ENCODE measurements at regions of chr12 and their contacts with region 1.

Region 1: DNA sequence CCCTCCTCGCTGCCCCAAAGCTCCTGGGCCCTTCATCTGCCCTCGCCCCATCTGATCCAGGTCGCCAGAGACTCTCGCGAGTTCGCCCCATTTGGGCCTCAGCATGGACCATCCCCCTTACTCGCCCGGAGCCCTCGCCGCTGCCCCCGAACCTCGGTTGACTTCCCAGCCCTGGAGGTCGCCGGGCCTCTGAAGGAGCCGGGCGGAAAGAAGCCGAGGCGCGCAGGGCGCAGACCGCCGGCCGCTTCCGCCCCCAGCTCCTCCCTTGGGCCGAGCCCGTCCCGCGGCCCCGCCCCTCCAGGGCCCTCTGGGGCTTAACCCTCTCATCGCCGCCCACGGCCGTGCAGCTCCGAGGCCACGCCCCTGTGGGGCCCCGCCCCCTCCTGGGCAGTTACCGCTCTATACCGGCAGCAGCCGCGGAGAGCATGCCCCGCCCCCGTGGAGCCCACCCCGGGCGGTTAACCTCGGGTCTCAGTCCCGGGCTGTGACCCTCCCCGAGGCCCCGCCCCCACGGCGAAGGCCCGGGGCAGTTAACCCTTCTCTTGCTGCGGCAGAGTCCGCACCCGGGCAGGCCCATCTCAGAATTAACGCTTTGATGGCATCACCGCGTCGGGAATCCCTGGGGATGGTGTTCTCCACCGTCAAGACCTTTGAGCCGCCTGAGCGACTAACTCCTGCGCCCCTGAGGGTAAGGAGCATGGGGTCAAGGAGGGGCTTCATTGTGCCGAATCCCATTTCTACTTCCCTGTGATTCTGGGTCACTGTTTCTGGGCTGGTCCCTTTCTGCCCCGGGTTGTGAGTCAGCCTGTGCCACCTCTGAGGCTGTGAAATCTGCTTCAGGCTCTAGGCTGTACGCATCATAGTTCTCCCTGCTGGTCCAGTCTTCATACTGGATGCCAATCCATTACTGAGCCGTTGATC is at the start of gene SPSB2:
- DNase-seq: peak; percentile 86 to 98 (median 94)
- H3K4me3 ChIP-seq: peak within 1 kb of the TSS; percentile 55 to 100 (median 88)
- H3K27ac ChIP-seq: peak within 1 kb of the TSS; percentile 25 to 99 (median 85)
- H3K27me3 ChIP-seq: no peaks in the 10 kb centered on the region
- CTCF ChIP-seq: peak in 33 of 56 donors; percentile 5 to 54 (median 32)
- total RNA-seq, gene SPSB2: 1.8 to 12.4 (median 5.6) TPM

Region 2: DNA sequence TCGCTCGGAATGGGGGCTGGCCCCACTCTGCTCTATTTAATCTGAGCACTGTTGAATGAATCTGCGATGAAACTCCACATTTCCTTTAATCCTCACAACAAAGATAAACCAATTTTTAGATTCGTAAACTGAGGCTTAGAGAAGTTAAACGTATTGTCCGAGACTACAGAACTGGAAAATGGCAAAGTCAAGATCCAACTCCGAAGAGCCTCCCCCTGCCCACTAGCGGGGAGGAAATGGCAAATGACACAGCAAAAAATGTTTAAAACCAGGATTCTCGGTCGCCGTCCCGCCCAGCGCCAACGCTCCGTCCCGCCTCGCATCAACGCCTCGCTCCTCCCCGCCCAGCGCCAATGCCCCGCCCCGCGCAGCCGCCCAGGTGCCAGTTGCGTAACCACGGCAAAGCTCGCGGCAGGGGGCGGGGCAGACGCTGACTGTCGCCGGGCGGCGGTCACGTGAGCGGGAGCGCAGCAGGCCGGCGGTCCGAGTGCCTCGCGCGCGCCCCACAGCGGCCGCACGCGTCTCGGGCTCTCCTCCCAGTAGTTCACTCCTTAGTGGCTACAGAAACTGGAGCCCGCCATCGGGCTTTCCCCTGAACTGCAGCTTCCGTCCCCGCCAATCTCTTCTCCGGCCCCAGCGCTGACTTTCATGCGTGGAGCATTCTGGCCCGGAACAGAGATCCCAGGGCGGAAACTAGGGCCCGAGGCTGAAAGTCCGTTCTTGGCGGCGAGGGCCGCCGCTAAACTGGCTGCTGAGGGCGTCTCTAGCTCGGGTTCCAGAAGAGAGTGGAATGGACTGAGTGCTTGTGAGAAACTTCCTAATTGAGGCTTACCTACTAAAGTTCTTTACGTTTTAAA is 17.7 kb after region 1 on chr12:
- intact Hi-C with region 1: loop called (anchors 1 to 2 kb)
- DNase-seq: peak; percentile 96 to 99 (median 98)
- H3K4me3 ChIP-seq: peak overlapping the region; percentile 34 to 88 (median 65)
- H3K27ac ChIP-seq: peak overlapping the region; percentile 85 to 100 (median 97)
- H3K27me3 ChIP-seq: no peaks in the 10 kb centered on the region
- CTCF ChIP-seq: peak; percentile 84 to 99 (median 98)

Region 3: GRCh38 chr12:6904280-6905278 is 31.2 kb after region 1 on chr12 and contains the start of gene LRRC23:
- intact Hi-C with region 1: loop called (anchors 5 kb)
- DNase-seq: peak; percentile 97 to 99 (median 99)
- H3K4me3 ChIP-seq: peak within 1 kb of the TSS; percentile 55 to 99 (median 81)
- H3K27ac ChIP-seq: peak within 1 kb of the TSS; percentile 13 to 95 (median 87)
- H3K27me3 ChIP-seq: no peaks in the 10 kb centered on the region
- CTCF ChIP-seq: peak in 24 of 56 donors; percentile 8 to 54 (median 25)
- total RNA-seq, gene LRRC23: 16.3 to 32.4 (median 22.4) TPM

Region 4: GRCh38 chr12:6927379-6928024 is 54.1 kb after region 1 on chr12 and contains the start of gene ATN1:
- intact Hi-C with region 1: loop called in 1 of 2 experiments (anchors 5 kb)
- DNase-seq: peak in 9 of 10 donors; percentile 55 to 86 (median 79)
- H3K4me3 ChIP-seq: peak within 1 kb of the TSS; percentile 58 to 89 (median 78)
- H3K27ac ChIP-seq: peak within 1 kb of the TSS; percentile 82 to 98 (median 95)
- H3K27me3 ChIP-seq: no peaks in the 10 kb centered on the region
- CTCF ChIP-seq: peak in 1 of 56 donors; percentile 24
- total RNA-seq, gene ATN1: 147 to 334 (median 199) TPM

Region 5: GRCh38 chr12:7018350-7019042 is 145.1 kb after region 1 on chr12 and contains the start of gene LPCAT3:
- intact Hi-C with region 1: loop called in 1 of 2 experiments (anchors 5 kb)
- DNase-seq: peak; percentile 96 to 99 (median 98)
- H3K4me3 ChIP-seq: peak within 1 kb of the TSS; percentile 68 to 97 (median 89)
- H3K27ac ChIP-seq: peak within 1 kb of the TSS; percentile 63 to 98 (median 91)
- H3K27me3 ChIP-seq: no peaks in the 10 kb centered on the region
- CTCF ChIP-seq: peak; percentile 69 to 97 (median 88)
- total RNA-seq, gene LPCAT3: 10.6 to 35.2 (median 20.4) TPM

Region 6: DNA sequence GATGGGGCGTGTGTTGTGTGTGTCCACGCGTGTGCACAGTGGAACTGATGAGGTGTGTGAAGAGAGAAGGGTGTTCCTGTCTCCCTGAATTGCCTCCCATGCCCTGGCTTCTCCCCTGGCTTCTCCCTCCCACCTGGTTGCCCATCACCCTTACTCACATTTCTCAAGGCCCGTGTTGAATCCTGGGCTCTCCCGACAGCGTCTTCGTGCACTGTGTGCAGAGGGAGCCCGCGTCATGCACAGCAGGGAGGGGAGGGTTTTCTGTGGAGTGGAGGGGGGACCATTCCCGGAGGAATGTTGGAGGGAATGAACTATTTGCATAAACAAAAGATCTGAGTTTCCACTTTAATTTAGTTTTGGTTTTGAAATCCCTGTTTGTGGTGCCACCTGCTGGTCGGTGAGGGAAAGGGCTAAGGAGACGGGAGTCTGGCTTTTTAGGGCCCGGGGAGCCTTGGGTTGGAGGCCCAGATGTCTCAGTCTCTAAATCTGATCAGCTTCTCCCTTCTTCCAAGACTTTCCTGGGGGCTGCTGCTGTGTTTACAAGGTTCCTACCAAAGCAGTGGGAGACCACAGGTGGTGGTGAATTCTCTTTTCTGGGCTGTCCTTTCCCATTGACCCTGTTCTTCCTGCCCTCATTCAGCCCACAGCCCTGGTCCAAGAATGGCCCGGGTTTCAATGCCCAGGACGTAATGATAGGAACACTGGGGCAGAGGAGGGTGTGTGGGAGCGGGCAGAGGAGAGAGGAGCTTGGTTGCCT is 219.1 kb after region 1 on chr12 and contains the start of gene C1R:
- intact Hi-C with region 1: loop called in 1 of 2 experiments (anchors 5 kb)
- DNase-seq: peak in 9 of 10 donors; percentile 52 to 69 (median 60)
- H3K4me3 ChIP-seq: peak within 1 kb of the TSS; percentile 32 to 80 (median 60)
- H3K27ac ChIP-seq: peak within 1 kb of the TSS in 29 of 59 donors; percentile 0 to 79 (median 47)
- H3K27me3 ChIP-seq: peaks cover 0 to 2% (median 0%) of the 10 kb centered on the region in 45 donors
- CTCF ChIP-seq: peak; percentile 77 to 93 (median 87)
- total RNA-seq, gene C1R: 7.4 to 140 (median 26.2) TPM